CD4-positive, alpha-beta memory T cell (primary cell): ENCODE measurements at regions of chr2 and their contacts with region 1.

Region 1: DNA sequence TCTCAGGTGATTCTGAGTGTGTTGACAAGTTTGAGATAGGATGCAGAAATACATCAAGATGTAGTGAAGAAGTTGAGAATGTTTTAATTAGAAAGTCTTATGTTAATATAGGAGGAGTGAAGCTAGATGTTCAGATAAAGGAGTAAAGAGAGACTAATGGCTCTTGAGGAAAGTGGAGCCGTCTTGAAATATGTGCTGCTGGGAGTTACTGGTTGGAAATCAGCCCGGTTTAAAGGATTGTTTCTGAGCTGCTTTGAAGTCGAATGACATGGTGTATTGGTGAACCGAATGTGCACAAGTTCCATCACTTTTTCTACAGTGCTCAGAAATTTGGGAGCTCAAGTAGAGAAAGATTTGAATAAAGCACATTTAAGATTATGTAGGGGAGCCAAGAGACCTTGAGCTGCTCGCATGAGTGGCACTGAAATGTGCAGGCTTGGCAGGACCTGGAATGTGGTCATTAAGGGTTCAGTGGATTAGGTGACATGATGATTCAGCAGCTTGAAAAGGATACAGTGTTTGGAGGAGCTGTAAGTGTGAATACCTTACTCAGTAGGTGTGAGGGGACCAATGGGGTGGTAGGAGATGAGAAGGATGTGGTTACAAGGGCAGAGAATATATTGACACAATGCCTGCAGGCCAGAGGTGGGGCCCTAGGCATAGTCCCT is 68.6 kb downstream of the CAB39 start:
- DNase-seq: peak; percentile 59 to 83 (median 64)
- H3K4me3 ChIP-seq: no peak overlapping the region
- H3K4me3 Mint-ChIP-seq: peak overlapping the region in 6 of 8 donors; percentile 13 to 60 (median 34)
- H3K27ac ChIP-seq: peak overlapping the region; percentile 33
- H3K27ac Mint-ChIP-seq: peak overlapping the region; percentile 14 to 93 (median 64)
- H3K4me1 ChIP-seq: peaks cover 78% of the 10 kb centered on the region
- H3K4me1 Mint-ChIP-seq: peaks cover 60 to 81% (median 72%) of the 10 kb centered on the region in 4 donors
- H3K27me3 ChIP-seq: no peaks in the 10 kb centered on the region
- H3K27me3 Mint-ChIP-seq: no peaks in the 10 kb centered on the region

Region 2: DNA sequence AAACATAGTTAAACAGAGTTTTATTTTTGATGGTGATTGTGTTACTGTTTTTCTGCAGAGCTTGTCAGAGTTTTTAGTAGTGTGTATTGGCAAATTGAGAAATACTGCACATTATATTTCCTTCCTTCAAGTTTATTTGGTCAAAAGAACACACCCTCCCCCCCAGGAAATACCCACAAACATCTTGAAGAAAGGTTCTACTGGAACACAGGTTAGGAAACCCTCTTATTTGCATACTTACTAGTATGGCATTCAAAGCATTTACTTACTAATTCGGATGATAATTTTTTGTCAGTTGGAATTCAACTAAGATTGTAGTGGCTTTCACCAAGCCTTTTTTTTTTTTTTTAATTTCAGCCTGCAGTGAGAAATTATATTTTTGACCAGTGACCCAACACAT is 59.6 kb before region 1 on chr2:
- CTCF ChIA-PET with region 1: interaction called, 4 read pairs
- POLR2A ChIA-PET with region 1: interaction called, 7 read pairs
- intact Hi-C with region 1: loop called (anchors 2 kb)
- DNase-seq: peak in 4 of 5 donors; percentile 14 to 38 (median 23)
- H3K4me3 ChIP-seq: no peak overlapping the region
- H3K4me3 Mint-ChIP-seq: peak overlapping the region; percentile 49 to 80 (median 63)
- H3K27ac ChIP-seq: peak overlapping the region; percentile 34
- H3K27ac Mint-ChIP-seq: peak overlapping the region; percentile 14 to 86 (median 78)
- H3K4me1 ChIP-seq: peaks cover 98% of the 10 kb centered on the region
- H3K4me1 Mint-ChIP-seq: peaks cover 64 to 92% (median 80%) of the 10 kb centered on the region in 4 donors
- H3K27me3 ChIP-seq: no peaks in the 10 kb centered on the region
- H3K27me3 Mint-ChIP-seq: no peaks in the 10 kb centered on the region

Region 3: GRCh38 chr2:230793572-230794359 is 12.5 kb after region 1 on chr2:
- CTCF ChIA-PET with region 1: interaction called, 45 read pairs
- POLR2A ChIA-PET with region 1: interaction called, 142 read pairs
- intact Hi-C with region 1: loop called (anchors 1 kb)
- DNase-seq: peak; percentile 65 to 92 (median 71)
- H3K4me3 ChIP-seq: no peak overlapping the region
- H3K4me3 Mint-ChIP-seq: peak overlapping the region; percentile 63 to 82 (median 75)
- H3K27ac ChIP-seq: peak overlapping the region; percentile 61
- H3K27ac Mint-ChIP-seq: peak overlapping the region in 6 of 7 donors; percentile 88 to 96 (median 92)
- H3K4me1 ChIP-seq: peaks cover 72% of the 10 kb centered on the region
- H3K4me1 Mint-ChIP-seq: peaks cover 41 to 63% (median 46%) of the 10 kb centered on the region in 4 donors
- H3K27me3 ChIP-seq: no peaks in the 10 kb centered on the region
- H3K27me3 Mint-ChIP-seq: no peaks in the 10 kb centered on the region